Esophagus muscularis mucosa (tissue), 4 donors: ENCODE measurements at regions of chr11 and their contacts with region 1.

Region 1: DNA sequence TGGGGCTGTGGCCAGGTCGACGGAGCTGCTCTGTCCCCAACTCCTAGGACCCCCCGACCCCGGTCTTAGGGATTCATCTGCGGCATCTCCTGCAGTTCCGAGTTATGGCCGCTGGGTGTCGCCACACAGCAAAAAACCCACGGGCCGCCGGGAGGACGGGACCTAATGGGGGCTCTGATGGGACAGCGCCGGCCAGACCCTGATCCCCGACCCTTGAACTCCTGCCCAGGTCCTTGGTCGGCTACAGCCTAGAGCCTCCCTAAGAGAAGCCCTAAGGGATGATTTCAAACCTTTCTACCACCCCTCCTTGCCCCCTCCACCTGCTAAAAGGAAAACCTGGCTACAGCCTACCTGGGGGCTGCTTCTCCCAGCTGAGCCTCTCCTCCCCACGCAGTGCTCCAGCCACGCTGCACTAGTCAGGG is 30.8 kb upstream of the LRRC10B start:
- DNase-seq: no peak
- H3K4me3 ChIP-seq: no peak overlapping the region
- H3K27ac ChIP-seq: peak overlapping the region in 2 of 4 donors; percentile 2 to 8
- H3K4me1 ChIP-seq: peaks cover 23 to 33% (median 28%) of the 10 kb centered on the region in 4 donors
- H3K27me3 ChIP-seq: peaks cover 0 to 22% (median 2%) of the 10 kb centered on the region in 4 donors
- CTCF ChIP-seq: peak; percentile 88 to 97 (median 93)
- EP300 ChIP-seq: no peak
- POLR2A ChIP-seq: no peak

Region 2: DNA sequence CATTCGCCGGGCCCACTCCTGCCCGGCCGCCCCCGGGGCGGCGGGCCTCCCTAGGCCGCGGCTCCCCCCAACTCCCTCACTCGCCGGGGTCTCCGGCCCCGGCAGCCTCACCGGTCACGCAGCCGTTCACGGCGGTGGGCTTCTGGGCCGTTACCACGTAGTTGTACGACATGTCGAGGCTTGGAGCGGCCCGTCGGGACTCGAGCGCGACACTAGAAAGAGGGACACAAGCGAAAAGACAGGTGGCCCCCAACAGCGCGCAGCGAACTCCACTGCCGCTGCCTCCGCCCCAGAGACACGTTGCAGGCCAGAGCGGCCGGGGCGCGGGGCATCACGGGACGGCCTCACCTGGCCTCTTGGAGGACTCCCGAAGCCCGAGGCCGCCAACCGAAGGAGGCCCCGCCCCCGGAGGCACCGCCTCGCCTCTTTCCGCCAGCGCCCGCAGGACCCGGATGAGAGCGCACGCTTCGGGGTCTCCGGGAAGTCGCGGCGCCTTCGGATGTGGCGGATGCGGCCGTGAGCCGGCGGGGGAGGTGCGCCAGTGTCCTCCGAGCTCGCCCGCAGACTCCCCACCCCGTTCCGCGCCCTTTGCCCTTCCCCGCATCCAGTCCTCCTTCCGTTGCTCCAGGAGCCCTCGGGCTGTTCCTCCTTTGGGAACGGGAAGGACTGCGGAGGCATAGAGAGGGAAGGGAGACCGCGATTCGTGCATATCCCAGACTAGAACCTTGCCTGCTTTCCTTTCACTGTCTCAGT is 144.8 kb before region 1 on chr11 and contains the starts of genes DDB1 and TKFC:
- intact Hi-C with region 1: no loop called
- DNase-seq: peak; percentile 98
- H3K4me3 ChIP-seq: peak within 1 kb of the TSS; percentile 87 to 99 (median 94)
- H3K27ac ChIP-seq: peak within 1 kb of the TSS; percentile 89 to 94 (median 91)
- H3K4me1 ChIP-seq: peaks cover 31 to 66% (median 42%) of the 10 kb centered on the region in 4 donors
- H3K27me3 ChIP-seq: no peaks in the 10 kb centered on the region
- CTCF ChIP-seq: peak in 1 of 3 experiments; percentile 11
- EP300 ChIP-seq: no peak
- POLR2A ChIP-seq: peak; percentile 53
- total RNA-seq, gene DDB1: 102 to 164 (median 118) TPM
- total RNA-seq, gene TKFC: 12.9 to 24.2 (median 14.8) TPM

Region 3: DNA sequence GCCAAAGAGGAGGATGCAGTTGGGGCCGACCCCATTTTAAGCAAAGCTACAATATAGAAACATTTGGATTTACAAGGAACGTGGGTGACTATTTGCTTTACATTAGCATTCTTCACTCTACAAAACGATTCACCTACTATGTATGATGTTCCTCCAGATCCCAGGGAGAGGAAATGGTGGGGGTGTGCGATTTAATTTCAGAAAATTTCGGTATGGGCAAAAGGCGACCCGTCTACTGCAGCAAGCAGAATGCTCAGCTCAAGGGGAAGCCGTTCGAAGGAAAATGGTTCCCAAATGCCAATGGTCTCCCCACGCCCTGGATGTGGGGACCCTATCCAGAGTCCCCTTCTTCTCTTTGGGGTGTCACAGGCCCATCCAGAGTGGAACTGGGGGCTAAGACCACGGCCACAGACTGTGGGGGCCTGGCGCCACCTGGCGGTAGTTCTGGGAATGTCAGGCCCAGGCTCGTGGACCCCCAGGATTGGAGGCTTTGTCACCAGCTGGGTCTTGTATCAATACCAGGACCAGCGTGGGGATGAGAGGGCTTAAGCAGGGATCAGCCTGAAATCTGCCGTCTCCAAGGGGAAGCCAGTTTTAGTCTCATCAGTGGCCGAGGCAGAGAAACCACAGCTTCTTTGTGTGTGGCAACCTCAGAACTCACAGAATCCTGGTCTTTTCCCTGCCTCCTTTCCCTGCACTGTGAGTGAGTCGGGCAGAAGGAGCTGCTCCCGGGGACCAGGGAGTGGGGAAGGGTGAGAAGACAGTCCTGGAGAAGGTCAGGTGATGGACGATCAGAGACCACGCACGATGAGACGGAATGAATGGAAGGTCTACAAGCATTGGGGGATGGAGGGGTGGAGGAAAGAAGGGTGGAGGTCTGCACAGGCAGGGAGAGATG is 39.2 kb after region 1 on chr11:
- intact Hi-C with region 1: loop called (anchors 2 kb)
- DNase-seq: no peak
- H3K4me3 ChIP-seq: peak overlapping the region; percentile 2 to 28 (median 16)
- H3K27ac ChIP-seq: no peak overlapping the region
- H3K4me1 ChIP-seq: peaks cover 5 to 15% (median 13%) of the 10 kb centered on the region in 4 donors
- H3K27me3 ChIP-seq: peaks cover 0 to 40% (median 8%) of the 10 kb centered on the region in 4 donors
- CTCF ChIP-seq: peak in 2 of 3 experiments; percentile 94 to 99
- EP300 ChIP-seq: no peak
- POLR2A ChIP-seq: no peak

Region 4: GRCh38 chr11:61639816-61640443 is 162.2 kb after region 1 on chr11:
- intact Hi-C with region 1: loop called (anchors 2 kb)
- DNase-seq: no peak
- H3K4me3 ChIP-seq: no peak overlapping the region
- H3K27ac ChIP-seq: no peak overlapping the region
- H3K4me1 ChIP-seq: peaks cover 0 to 7% (median 5%) of the 10 kb centered on the region in 4 donors
- H3K27me3 ChIP-seq: peaks cover 0 to 5% (median 0%) of the 10 kb centered on the region in 4 donors
- CTCF ChIP-seq: no peak
- EP300 ChIP-seq: no peak
- POLR2A ChIP-seq: no peak